ENCODE measurements at regions of chr1 and their contacts with region 1.

Region 1: GRCh38 chr1:45569962-45570581 is 13.8 kb upstream of the NASP start:
- DNase-seq: peak; percentile 77
- H3K4me3 ChIP-seq: no peak overlapping the region
- H3K27ac ChIP-seq: no peak overlapping the region
- H3K4me1 ChIP-seq: no peaks in the 10 kb centered on the region
- H3K27me3 ChIP-seq: no peaks in the 10 kb centered on the region
- CTCF ChIP-seq: peak; percentile 98

Region 2: DNA sequence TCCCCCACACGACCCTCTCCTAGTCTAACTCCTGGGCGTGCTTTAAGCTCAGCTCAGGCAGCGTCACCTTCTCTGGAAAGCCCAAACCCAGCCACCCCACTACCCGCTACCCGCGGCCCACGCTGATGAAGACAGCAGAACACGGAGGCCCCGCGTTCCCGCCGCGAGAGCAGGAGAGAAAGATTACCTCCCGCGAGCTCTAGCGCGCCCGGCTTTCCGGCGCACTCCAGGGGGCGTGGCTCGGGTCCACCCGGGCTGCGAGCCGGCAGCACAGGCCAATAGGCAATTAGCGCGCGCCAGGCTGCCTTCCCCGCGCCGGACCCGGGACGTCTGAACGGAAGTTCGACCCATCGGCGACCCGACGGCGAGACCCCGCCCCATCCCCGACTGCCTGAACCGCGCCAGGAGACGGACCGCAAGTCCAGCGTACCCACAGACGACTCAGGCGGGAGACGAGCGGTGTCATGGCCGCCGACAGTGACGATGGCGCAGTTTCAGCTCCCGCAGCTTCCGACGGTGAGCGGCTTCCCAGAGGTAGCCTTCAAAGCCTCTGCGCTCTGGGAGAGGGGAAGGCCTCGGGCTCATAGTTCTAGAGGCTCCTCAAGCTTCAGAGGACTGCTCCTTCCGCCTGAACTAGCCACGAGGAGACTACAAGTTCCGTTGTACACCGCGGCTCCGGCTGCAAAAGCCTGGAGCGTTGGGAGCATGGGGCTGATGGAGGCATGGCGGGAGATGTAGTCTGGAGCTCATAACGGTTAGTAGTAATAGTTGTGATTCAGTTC is 230.1 kb before region 1 on chr1 and contains the starts of genes MUTYH and TOE1:
- intact Hi-C with region 1: loop called (anchors 10 kb)
- DNase-seq: peak; percentile 95
- H3K4me3 ChIP-seq: peak within 1 kb of the TSS; percentile 73
- H3K27ac ChIP-seq: peak within 1 kb of the TSS; percentile 93
- H3K4me1 ChIP-seq: peaks cover 9% of the 10 kb centered on the region
- H3K27me3 ChIP-seq: no peaks in the 10 kb centered on the region
- CTCF ChIP-seq: no peak
- total RNA-seq, gene MUTYH: 17.0 to 65.0 TPM
- total RNA-seq, gene TOE1: 10.1 to 20.5 TPM

Region 3: GRCh38 chr1:45412899-45413298 is 157.2 kb before region 1 on chr1:
- intact Hi-C with region 1: no loop called
- DNase-seq: no peak
- H3K4me3 ChIP-seq: no peak overlapping the region
- H3K27ac ChIP-seq: no peak overlapping the region
- H3K4me1 ChIP-seq: no peaks in the 10 kb centered on the region
- H3K27me3 ChIP-seq: no peaks in the 10 kb centered on the region
- CTCF ChIP-seq: no peak

Region 4: DNA sequence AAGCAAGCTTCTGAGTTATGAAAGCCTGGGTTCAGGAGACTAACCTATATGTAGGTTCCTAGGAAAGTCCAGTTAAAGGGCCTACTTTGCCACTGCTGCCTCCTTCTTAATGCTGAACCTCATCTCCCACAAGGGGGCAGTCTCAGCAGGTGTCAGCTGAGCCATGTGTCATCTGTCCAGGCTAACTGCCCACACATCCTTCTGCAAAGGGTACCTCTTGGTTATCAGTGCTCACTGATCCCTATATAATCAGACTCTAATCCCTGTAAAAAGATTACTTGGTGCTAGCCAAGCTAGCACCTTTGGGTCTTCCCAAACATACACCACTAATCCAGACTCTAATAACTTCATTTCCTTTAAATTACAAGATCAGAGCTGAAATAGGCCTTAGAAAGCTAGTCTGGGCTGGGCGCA is 57.4 kb before region 1 on chr1:
- intact Hi-C with region 1: loop called (anchors 2 kb)
- DNase-seq: peak; percentile 75
- H3K4me3 ChIP-seq: no peak overlapping the region
- H3K27ac ChIP-seq: no peak overlapping the region
- H3K4me1 ChIP-seq: no peaks in the 10 kb centered on the region
- H3K27me3 ChIP-seq: no peaks in the 10 kb centered on the region
- CTCF ChIP-seq: peak; percentile 79

Region 5: DNA sequence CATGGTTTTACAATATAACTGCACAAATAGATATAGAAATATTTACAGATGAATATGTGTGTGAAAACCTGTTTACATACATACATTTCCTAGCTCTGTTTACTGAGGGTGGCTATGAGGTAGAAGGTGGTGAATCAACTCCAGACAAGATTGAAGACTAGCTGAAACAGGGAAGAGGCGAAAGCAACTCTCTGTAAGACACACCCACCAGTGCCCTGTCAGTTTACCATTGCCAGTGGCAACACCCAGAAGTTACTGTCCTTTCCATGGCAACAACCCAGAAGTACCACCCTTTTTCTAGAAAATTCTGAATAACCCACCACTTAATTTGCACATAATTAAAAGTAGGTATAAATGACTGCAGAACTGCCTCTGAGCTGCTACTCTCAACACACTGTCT is 134.6 kb after region 1 on chr1:
- intact Hi-C with region 1: no loop called
- DNase-seq: no peak
- H3K4me3 ChIP-seq: no peak overlapping the region
- H3K27ac ChIP-seq: no peak overlapping the region
- H3K4me1 ChIP-seq: no peaks in the 10 kb centered on the region
- H3K27me3 ChIP-seq: no peaks in the 10 kb centered on the region
- CTCF ChIP-seq: no peak

Region 6: GRCh38 chr1:45730475-45731339 is 160.6 kb after region 1 on chr1:
- intact Hi-C with region 1: no loop called
- DNase-seq: no peak
- H3K4me3 ChIP-seq: no peak overlapping the region
- H3K27ac ChIP-seq: no peak overlapping the region
- H3K4me1 ChIP-seq: no peaks in the 10 kb centered on the region
- H3K27me3 ChIP-seq: no peaks in the 10 kb centered on the region
- CTCF ChIP-seq: no peak